ENCODE measurements at regions of chr1 and their contacts with region 1.

Region 1: DNA sequence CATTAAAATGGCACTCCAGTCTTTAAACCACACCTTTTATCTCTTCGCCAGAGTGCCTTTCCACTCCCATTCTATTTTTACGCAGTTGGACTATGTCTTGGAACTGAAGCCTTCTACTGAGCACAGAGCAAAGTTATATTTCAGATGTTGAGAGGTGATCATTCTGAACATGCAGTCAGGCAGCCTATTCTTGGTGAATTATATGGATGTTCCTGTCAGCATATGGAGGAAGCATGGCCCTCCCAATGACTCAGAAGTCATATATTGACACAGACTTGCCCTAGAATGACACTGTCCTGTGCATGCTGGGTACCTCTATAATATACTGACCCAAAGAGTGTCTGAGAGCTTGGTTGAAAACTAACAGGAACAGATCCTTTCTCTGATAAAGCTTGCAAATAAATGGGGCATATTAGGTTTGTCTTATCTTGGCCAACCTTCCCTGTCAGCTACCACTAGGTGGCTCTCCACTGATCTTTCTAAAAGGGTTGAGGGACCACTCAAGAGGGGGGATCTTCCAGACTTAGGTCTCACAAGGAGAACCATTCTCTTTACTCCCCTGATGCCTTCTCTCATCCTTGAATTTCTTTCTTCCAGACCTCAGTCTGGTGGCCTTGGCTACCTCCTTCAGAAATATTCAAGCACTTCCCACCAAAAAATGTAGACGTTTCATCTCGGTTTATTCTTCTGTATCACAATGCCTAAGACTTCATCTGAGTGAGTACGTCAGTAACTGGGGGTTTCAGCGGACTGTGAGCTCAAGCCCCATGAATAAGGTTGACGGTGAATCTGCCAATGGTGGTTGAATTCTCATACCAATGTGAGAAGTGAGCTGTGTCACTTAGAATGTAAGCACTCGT is 11.8 kb upstream of the ALG14 start:
- DNase-seq: no peak
- ATAC-seq: peak; percentile 90
- H3K4me3 ChIP-seq: no peak overlapping the region
- H3K27ac ChIP-seq: no peak overlapping the region
- H3K4me1 ChIP-seq: no peaks in the 10 kb centered on the region
- H3K27me3 ChIP-seq: peaks cover 0 to 2% of the 10 kb centered on the region in 2 experiments; a peak in 1 of 4 replicates
- CTCF ChIP-seq: peak; percentile 63 to 80 (median 78)
- EP300 ChIP-seq: no peak
- POLR2A ChIP-seq: no peak
- RAD21 ChIP-seq: peak; percentile 65

Region 2: DNA sequence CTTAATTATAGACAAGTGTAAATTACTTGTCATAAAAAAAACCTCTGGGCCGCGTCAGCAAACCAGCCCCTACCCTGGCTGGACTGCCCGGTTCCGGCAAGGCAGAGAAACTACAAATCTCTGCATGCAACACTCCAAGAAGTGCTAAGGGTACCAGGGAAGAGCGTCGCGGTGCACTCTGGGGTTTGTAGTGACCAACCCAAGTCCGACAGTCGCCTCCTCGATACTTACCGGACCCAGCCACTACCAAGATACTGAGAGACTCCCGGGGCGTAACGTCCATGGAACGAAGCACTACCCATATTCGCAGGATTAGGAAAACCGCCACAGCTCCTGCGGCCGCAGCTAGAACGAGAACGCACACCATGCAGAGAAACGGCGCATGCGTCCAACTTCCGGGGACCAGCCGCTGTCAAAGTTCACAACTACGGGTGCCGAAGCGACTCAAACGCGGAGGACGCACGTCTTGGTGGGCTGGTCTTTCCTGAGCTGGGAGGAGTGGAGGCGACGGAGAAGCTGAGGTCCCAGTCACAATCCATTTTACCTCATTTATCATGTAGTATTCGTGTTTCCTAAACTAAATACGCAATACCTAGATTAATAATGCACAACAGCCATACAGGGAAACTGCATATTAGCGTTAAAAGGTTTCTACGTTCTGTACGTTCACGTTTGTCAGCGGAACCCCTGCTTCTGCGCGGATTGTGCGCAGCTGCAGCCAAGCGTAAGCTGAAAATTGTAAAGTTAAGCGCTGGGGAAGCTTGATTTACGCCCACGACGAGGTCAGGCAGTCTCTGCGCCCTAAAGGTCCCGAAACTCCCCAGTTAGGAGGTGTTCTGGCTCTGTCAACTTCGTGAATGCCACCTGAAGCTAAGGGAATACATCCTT is 11.8 kb before region 1 on chr1 and contains the start of gene ALG14:
- CTCF ChIA-PET with region 1: interaction called, 44 read pairs
- POLR2A ChIA-PET with region 1: no interaction called
- RAD21 ChIA-PET with region 1: interaction called, 4 read pairs
- SMC1A ChIA-PET with region 1: interaction called, 10 read pairs
- in situ Hi-C with region 1: no loop called
- intact Hi-C with region 1: no loop called
- DNase-seq: peak; percentile 91
- ATAC-seq: peak; percentile 99
- H3K4me3 ChIP-seq: peak within 1 kb of the TSS; percentile 76
- H3K27ac ChIP-seq: peak within 1 kb of the TSS; percentile 94
- H3K4me1 ChIP-seq: no peaks in the 10 kb centered on the region
- H3K27me3 ChIP-seq: no peaks in the 10 kb centered on the region
- CTCF ChIP-seq: no peak
- EP300 ChIP-seq: no peak
- POLR2A ChIP-seq: peak; percentile 71
- RAD21 ChIP-seq: no peak
- polyA plus RNA-seq, gene ALG14: 15.1 to 19.2 TPM

Region 3: DNA sequence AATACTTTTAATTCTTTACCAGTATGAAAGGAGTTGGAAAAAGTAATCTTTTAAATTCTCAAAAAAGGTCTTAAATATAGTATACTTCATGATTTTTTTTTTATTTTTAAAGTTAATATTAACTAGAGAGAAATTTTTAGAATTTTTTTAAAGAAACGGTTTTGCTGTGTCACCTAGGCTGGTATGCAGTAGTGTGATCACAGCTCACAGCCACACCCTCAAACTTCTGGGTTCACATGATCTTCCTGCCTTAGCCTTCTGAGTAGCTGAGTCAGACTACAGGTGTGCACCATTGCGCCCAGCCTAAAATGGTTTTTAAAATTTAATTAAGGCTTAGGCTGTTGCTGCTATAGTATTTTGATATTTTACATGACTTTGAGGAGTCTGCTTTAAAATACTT is 85.0 kb after region 1 on chr1:
- CTCF ChIA-PET with region 1: no interaction called
- POLR2A ChIA-PET with region 1: no interaction called
- RAD21 ChIA-PET with region 1: no interaction called
- SMC1A ChIA-PET with region 1: no interaction called
- in situ Hi-C with region 1: no loop called
- intact Hi-C with region 1: no loop called
- DNase-seq: no peak
- ATAC-seq: no peak
- H3K4me3 ChIP-seq: no peak overlapping the region
- H3K27ac ChIP-seq: no peak overlapping the region
- H3K4me1 ChIP-seq: no peaks in the 10 kb centered on the region
- H3K27me3 ChIP-seq: no peaks in the 10 kb centered on the region
- CTCF ChIP-seq: no peak
- EP300 ChIP-seq: no peak
- POLR2A ChIP-seq: no peak
- RAD21 ChIP-seq: no peak

Region 4: GRCh38 chr1:95246511-95246910 is 162.0 kb after region 1 on chr1:
- CTCF ChIA-PET with region 1: interaction called, 13 read pairs
- POLR2A ChIA-PET with region 1: no interaction called
- RAD21 ChIA-PET with region 1: no interaction called
- SMC1A ChIA-PET with region 1: no interaction called
- in situ Hi-C with region 1: no loop called
- intact Hi-C with region 1: no loop called
- DNase-seq: no peak
- ATAC-seq: no peak
- H3K4me3 ChIP-seq: no peak overlapping the region
- H3K27ac ChIP-seq: no peak overlapping the region
- H3K4me1 ChIP-seq: no peaks in the 10 kb centered on the region
- H3K27me3 ChIP-seq: no peaks in the 10 kb centered on the region
- CTCF ChIP-seq: no peak
- EP300 ChIP-seq: no peak
- POLR2A ChIP-seq: no peak
- RAD21 ChIP-seq: no peak